ENCODE measurements at regions of chr22 and their contacts with region 1.

Region 1: GRCh38 chr22:40597526-40598430 is 38.7 kb downstream of the MRTFA start:
- DNase-seq: no peak
- ATAC-seq: no peak
- H3K4me3 Mint-ChIP-seq: peak overlapping the region; percentile 29
- H3K27ac Mint-ChIP-seq: peak overlapping the region; percentile 96
- H3K4me1 Mint-ChIP-seq: peaks cover 66% of the 10 kb centered on the region
- H3K27me3 Mint-ChIP-seq: no peaks in the 10 kb centered on the region
- CTCF ChIP-seq: no peak

Region 2: DNA sequence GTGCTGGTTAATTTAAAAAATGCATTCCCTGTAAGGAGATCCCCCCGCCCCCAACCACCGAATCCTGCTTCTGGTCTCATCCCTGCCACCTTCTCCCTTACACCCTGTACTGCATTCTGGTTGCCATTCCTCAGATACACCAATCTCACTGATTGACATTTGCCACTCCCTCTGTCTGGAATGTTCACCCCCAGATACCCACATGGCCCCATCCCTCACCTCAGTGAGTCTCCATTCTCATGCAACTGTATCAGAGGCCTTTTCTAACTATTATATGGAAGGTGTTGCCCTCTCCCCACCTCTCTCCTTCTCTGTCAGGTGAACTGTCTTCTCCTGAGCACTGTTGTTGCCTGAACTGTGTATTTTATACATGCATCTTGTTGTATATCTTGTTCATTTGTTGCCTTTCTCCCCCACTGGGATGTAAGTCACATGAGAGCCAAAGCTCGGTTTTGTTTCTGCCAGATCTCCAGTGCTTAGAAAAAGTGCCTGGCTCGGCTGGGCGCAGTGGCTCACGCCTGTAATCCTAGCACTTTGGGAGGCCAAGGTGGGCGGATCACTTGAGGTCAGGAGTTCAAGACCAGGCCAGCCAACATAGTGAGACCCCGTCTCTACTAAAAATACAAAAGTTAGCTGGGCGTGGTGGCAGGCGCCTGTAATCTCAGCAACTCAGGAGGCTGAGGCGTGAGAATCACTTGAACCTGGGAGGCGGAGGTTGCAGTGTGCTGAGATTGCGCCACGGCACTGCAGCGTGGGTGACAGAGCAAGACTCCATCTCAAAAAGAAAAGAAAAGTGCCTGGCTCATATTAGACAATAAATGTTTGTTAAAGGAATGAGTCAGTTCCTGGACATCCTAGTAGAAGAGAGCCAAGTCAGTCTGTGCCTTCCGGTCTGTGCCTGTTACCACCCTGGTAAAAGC is 359.1 kb before region 1 on chr22:
- CTCF ChIA-PET with region 1: no interaction called
- POLR2A ChIA-PET with region 1: no interaction called
- intact Hi-C with region 1: no loop called
- DNase-seq: no peak
- ATAC-seq: no peak
- H3K4me3 Mint-ChIP-seq: no peak overlapping the region
- H3K27ac Mint-ChIP-seq: peak overlapping the region; percentile 57
- H3K4me1 Mint-ChIP-seq: peaks cover 81% of the 10 kb centered on the region
- H3K27me3 Mint-ChIP-seq: no peaks in the 10 kb centered on the region
- CTCF ChIP-seq: no peak

Region 3: GRCh38 chr22:40533712-40534378 is 63.9 kb before region 1 on chr22:
- CTCF ChIA-PET with region 1: interaction called, 4 read pairs
- POLR2A ChIA-PET with region 1: interaction called, 23 read pairs
- intact Hi-C with region 1: loop called (anchors 2 kb)
- DNase-seq: no peak
- ATAC-seq: peak; percentile 96
- H3K4me3 Mint-ChIP-seq: peak overlapping the region; percentile 75
- H3K27ac Mint-ChIP-seq: peak overlapping the region; percentile 83
- H3K4me1 Mint-ChIP-seq: peaks cover 61% of the 10 kb centered on the region
- H3K27me3 Mint-ChIP-seq: no peaks in the 10 kb centered on the region
- CTCF ChIP-seq: no peak

Region 4: DNA sequence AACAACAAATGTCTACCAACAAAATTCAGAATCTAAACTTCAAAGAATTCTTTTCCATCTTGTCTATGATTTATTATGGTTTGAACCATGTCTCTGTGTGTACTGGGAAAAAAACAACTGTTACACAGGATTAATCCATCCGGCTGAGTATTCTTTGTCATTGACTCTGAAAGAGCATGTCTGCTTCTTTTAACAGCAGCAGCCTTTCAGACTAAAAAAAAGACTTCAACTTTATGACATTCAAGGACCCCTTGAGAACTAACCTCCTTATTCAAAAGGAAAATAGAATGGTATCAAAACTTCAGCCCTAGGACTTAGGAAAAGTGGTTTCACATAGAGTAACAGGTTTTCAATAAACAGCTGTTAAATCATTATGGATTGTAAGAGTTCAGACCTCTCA is 41.1 kb before region 1 on chr22:
- CTCF ChIA-PET with region 1: no interaction called
- POLR2A ChIA-PET with region 1: interaction called, 6 read pairs
- intact Hi-C with region 1: loop called (anchors 5 kb)
- DNase-seq: no peak
- ATAC-seq: no peak
- H3K4me3 Mint-ChIP-seq: no peak overlapping the region
- H3K27ac Mint-ChIP-seq: no peak overlapping the region
- H3K4me1 Mint-ChIP-seq: peaks cover 26% of the 10 kb centered on the region
- H3K27me3 Mint-ChIP-seq: no peaks in the 10 kb centered on the region
- CTCF ChIP-seq: no peak

Region 5: GRCh38 chr22:40583053-40583741 is 14.6 kb before region 1 on chr22:
- CTCF ChIA-PET with region 1: no interaction called
- POLR2A ChIA-PET with region 1: interaction called, 22 read pairs
- intact Hi-C with region 1: loop called (anchors 1 kb)
- DNase-seq: no peak
- ATAC-seq: peak; percentile 54
- H3K4me3 Mint-ChIP-seq: no peak overlapping the region
- H3K27ac Mint-ChIP-seq: peak overlapping the region; percentile 25
- H3K4me1 Mint-ChIP-seq: peaks cover 36% of the 10 kb centered on the region
- H3K27me3 Mint-ChIP-seq: no peaks in the 10 kb centered on the region
- CTCF ChIP-seq: no peak

Region 6: GRCh38 chr22:40645579-40646197 is 47.9 kb after region 1 on chr22:
- CTCF ChIA-PET with region 1: interaction called, 22 read pairs
- POLR2A ChIA-PET with region 1: interaction called, 9 read pairs
- intact Hi-C with region 1: no loop called
- DNase-seq: no peak
- ATAC-seq: no peak
- H3K4me3 Mint-ChIP-seq: no peak overlapping the region
- H3K27ac Mint-ChIP-seq: no peak overlapping the region
- H3K4me1 Mint-ChIP-seq: peaks cover 14% of the 10 kb centered on the region
- H3K27me3 Mint-ChIP-seq: no peaks in the 10 kb centered on the region
- CTCF ChIP-seq: no peak

Region 7: DNA sequence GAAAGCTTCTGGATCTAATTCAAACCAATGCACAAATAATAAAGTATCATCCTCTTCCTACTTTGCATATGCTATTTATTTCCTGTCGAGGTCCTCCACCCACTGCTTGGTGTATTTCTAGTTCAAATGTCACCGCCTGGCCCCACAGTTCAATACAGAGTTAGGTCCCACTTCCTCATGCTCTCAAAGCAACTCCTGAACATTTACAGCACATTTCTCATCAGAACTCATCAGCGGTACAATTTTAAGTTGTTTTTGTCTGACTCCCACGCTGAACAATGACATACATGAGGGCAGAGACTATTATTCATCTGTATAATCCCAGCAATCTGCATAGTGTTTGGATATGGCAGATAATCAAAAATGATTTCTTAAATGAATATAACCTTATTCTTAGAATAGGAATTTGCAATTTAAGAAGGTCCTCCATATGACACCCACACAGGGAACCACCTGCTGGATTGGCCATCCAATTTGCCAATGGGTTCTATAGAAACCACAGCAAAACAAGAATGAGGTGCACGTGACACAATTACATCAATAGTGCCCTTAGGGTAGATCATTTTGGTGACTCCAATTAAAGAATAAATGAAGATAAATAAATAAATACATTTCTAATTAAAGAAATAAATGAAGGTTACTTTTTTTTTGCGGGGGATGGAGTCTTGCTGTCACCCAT is 167.1 kb after region 1 on chr22:
- CTCF ChIA-PET with region 1: no interaction called
- POLR2A ChIA-PET with region 1: no interaction called
- intact Hi-C with region 1: loop called (anchors 5 kb)
- DNase-seq: no peak
- ATAC-seq: peak; percentile 89
- H3K4me3 Mint-ChIP-seq: peak overlapping the region; percentile 69
- H3K27ac Mint-ChIP-seq: peak overlapping the region; percentile 95
- H3K4me1 Mint-ChIP-seq: peaks cover 46% of the 10 kb centered on the region
- H3K27me3 Mint-ChIP-seq: no peaks in the 10 kb centered on the region
- CTCF ChIP-seq: no peak